Posterior cingulate gyrus (tissue), 11 donors: ENCODE measurements at regions of chr6 and their contacts with region 1.

Region 1: GRCh38 chr6:36546920-36547645 is at the start of gene STK38:
- DNase-seq: peak; percentile 80 to 97 (median 88)

Region 2: DNA sequence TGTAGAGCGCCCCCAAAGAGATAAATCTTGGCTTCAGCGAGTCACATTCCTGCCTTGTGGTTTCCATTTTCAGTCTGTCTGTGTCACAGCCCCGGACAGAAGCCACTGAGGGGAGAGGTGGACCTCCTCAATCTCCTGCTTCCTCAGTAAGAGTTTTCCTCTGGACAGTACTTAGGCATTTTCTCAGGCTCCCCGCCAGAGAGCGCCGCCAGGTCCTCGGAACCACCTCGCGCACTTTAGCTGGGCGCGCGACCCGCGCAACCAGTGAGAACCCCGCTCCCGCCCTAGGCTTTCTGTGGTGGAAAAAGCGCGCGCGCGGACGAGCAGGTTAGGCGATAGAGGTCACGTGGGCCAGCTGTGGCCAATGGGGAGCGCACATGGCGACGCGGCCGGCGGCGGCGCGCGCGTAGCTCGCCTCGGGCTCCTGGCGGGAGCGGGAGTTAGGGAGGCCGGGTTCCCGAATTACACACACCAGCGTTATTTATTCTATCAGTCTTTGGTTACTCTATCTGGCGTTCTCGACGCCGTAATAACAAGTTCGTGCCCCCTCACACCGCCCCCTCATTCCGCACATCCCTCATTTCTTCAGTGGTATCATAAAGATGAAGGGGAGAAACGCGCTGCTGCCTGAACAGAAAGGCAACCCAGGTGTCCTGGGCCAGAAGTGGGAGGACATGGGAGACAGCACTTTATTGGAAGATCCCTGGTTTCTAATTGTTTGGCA is 123.8 kb before region 1 on chr6:
- intact Hi-C with region 1: loop called (anchors 2 kb)
- DNase-seq: peak; percentile 94 to 99 (median 98)

Region 3: GRCh38 chr6:36650848-36651478 is 103.9 kb after region 1 on chr6:
- intact Hi-C with region 1: no loop called
- DNase-seq: peak in 1 of 10 donors; percentile 9

Region 4: GRCh38 chr6:37018198-37019064 is 471.3 kb after region 1 on chr6:
- intact Hi-C with region 1: no loop called
- DNase-seq: peak; percentile 85 to 99 (median 94)